GM10248 (cell line): ENCODE measurements at regions of chr20 and their contacts with region 1.

Region 1: DNA sequence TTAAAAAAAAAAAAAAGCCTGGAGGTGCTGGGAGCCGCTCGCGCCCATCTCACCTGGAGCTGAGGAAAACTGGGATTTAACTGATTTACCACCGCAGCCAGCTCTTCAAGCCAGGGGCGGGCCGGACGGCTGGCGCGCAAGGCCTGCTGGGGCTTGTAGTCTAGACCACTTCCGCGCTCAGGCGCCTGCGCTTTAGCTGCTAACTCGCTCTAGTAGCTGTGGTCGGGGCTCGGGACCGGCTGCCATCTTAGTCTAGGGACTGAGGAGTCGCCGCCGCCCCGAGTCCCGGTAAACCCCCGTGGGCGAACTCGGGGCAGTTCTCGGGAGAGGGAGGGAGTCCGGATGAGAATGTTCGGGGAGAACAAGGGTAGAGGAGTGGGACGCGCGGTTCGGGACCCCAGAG is at the start of gene ITCH:
- DNase-seq: peak; percentile 96
- CTCF ChIP-seq: no peak

Region 2: GRCh38 chr20:33843854-33844253 is 519.2 kb before region 1 on chr20:
- CTCF ChIA-PET with region 1: no interaction called
- POLR2A ChIA-PET with region 1: no interaction called
- DNase-seq: peak; percentile 64
- CTCF ChIP-seq: no peak

Region 3: GRCh38 chr20:34254979-34255378 is 108.1 kb before region 1 on chr20:
- CTCF ChIA-PET with region 1: no interaction called
- POLR2A ChIA-PET with region 1: no interaction called
- DNase-seq: no peak
- CTCF ChIP-seq: no peak

Region 4: DNA sequence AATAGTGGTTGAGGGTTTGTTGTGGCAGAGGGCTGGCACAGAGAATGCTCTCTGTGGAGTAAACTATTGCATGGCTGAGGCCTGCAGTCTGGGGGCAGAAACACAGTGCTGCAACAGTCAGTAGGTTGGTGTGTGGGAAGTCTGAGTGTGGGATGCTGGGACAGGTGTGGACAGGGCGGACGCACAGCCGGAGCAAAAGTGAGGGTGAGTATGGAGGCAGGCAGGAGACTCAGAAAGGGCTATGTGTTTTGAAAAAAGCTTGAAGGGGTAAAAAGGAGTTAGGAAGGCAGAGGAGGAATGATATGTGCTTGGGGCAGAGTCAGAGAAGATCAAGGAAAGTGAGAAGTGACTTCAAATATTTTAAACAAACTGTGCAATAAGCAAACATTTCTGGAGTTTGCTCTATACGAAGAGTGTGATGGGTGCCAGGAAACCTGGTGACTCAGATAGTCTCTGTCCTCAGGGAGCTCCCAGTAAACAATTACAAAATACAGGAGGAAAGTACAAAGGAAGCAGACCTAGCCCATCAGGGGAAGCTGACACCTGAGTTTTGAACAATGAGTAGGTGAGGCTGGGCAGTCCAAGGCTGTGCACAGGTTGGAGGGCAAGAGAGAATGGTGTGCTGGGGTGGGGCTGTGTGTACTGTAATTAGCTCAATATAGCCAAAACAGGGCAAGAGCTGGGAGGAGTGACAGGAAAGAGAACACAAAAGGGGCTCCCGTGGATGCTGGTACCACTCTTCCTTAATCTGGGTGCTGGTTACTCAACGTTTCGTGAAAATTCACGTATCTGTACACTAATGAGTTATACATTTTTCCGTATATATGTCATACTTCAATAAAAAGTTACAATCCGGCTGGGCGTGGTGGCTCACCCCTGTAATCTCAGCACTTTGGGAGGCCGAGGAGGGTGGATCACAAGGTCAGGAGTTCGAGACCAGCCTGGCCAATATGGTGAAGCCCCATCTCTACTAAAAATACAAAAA is 258.6 kb after region 1 on chr20:
- CTCF ChIA-PET with region 1: no interaction called
- POLR2A ChIA-PET with region 1: interaction called, 11 read pairs
- DNase-seq: no peak
- CTCF ChIP-seq: no peak